ENCODE measurements at regions of chr14 and their contacts with region 1.

Region 1: GRCh38 chr14:98189062-98189461 is 1082.9 kb downstream of the BCL11B start:
- DNase-seq: peak; percentile 67
- H3K4me3 Mint-ChIP-seq: peak overlapping the region; percentile 53
- H3K27ac Mint-ChIP-seq: peak overlapping the region; percentile 95
- H3K4me1 Mint-ChIP-seq: peaks cover 89% of the 10 kb centered on the region
- H3K27me3 Mint-ChIP-seq: no peaks in the 10 kb centered on the region

Region 2: DNA sequence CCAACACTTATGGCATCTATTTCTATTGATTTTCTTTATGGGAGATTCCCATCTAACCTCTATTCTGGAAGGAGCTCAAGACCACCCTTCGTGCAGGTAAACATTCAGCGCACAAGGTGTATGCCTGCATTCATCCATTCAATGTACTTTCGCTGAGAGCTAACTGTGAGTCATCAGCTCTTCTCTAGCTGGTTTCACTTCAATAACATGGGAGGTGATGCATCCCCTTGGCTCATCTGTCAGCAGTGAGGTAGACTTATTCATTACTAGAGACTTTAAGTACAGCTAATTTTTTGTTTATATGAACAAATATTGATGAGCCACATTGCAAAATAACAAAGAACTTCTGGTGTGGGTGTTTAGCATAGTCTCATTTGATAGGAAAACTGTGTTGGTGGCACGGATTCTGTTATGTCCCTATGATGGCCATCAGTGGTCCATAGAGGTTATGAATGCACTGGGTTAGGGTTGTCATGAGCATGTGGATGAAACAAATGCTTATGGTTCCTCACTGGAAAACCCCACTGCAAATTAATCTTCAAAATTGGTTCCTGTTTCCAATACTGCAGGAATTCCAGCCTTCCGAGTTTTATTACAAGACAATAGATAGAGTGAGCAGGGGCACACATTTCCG is 68.1 kb before region 1 on chr14:
- CTCF ChIA-PET with region 1: no interaction called
- POLR2A ChIA-PET with region 1: no interaction called
- DNase-seq: no peak
- H3K4me3 Mint-ChIP-seq: no peak overlapping the region
- H3K27ac Mint-ChIP-seq: no peak overlapping the region
- H3K4me1 Mint-ChIP-seq: peaks cover 20% of the 10 kb centered on the region
- H3K27me3 Mint-ChIP-seq: no peaks in the 10 kb centered on the region

Region 3: GRCh38 chr14:98167705-98168104 is 21.4 kb before region 1 on chr14:
- CTCF ChIA-PET with region 1: interaction called, 21 read pairs
- POLR2A ChIA-PET with region 1: interaction called, 244 read pairs
- DNase-seq: peak; percentile 55
- H3K4me3 Mint-ChIP-seq: no peak overlapping the region
- H3K27ac Mint-ChIP-seq: no peak overlapping the region
- H3K4me1 Mint-ChIP-seq: peaks cover 49% of the 10 kb centered on the region
- H3K27me3 Mint-ChIP-seq: peaks cover 2% of the 10 kb centered on the region

Region 4: DNA sequence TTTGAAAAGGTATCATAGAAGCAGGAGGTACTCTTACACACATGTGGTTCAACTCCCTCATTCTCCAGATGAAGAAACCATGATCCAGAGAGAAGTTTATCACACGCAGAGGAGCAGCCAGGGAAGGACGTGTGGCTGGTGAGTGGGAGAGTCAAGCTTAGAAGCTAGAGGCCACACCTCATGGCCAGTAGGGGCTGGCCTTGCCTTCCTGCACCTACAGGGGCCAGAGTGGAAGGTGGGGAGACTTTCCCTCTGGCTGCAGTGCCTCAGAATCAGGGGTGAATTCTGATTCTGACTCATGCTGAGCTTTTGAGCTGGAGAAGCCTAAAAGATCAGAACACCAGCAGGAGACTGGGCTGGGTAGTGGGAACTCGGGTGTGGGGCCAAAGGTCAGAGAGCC is 15.1 kb after region 1 on chr14:
- CTCF ChIA-PET with region 1: interaction called, 4 read pairs
- POLR2A ChIA-PET with region 1: interaction called, 46 read pairs
- DNase-seq: no peak
- H3K4me3 Mint-ChIP-seq: no peak overlapping the region
- H3K27ac Mint-ChIP-seq: no peak overlapping the region
- H3K4me1 Mint-ChIP-seq: peaks cover 38% of the 10 kb centered on the region
- H3K27me3 Mint-ChIP-seq: no peaks in the 10 kb centered on the region

Region 5: GRCh38 chr14:98227000-98227726 is 38.1 kb after region 1 on chr14:
- CTCF ChIA-PET with region 1: interaction called, 4 read pairs
- POLR2A ChIA-PET with region 1: interaction called, 17 read pairs
- DNase-seq: peak; percentile 50
- H3K4me3 Mint-ChIP-seq: peak overlapping the region; percentile 21
- H3K27ac Mint-ChIP-seq: peak overlapping the region; percentile 87
- H3K4me1 Mint-ChIP-seq: peaks cover 77% of the 10 kb centered on the region
- H3K27me3 Mint-ChIP-seq: no peaks in the 10 kb centered on the region

Region 6: GRCh38 chr14:99266181-99267178 is 1077.4 kb after region 1 on chr14:
- CTCF ChIA-PET with region 1: interaction called, 4 read pairs
- POLR2A ChIA-PET with region 1: interaction called, 93 read pairs
- DNase-seq: peak; percentile 92
- H3K4me3 Mint-ChIP-seq: peak overlapping the region; percentile 99
- H3K27ac Mint-ChIP-seq: peak overlapping the region; percentile 100
- H3K4me1 Mint-ChIP-seq: peaks cover 59% of the 10 kb centered on the region
- H3K27me3 Mint-ChIP-seq: no peaks in the 10 kb centered on the region

Measured in activated CD4-positive, alpha-beta memory T cell treated with anti-CD3 and anti-CD28 coated beads, Interleukin-2, amount 10 ng/mL, durations not matched to agents 7 days and 5 days (primary cell).